ENCODE measurements at regions of chr19 and their contacts with region 1.

Region 1: DNA sequence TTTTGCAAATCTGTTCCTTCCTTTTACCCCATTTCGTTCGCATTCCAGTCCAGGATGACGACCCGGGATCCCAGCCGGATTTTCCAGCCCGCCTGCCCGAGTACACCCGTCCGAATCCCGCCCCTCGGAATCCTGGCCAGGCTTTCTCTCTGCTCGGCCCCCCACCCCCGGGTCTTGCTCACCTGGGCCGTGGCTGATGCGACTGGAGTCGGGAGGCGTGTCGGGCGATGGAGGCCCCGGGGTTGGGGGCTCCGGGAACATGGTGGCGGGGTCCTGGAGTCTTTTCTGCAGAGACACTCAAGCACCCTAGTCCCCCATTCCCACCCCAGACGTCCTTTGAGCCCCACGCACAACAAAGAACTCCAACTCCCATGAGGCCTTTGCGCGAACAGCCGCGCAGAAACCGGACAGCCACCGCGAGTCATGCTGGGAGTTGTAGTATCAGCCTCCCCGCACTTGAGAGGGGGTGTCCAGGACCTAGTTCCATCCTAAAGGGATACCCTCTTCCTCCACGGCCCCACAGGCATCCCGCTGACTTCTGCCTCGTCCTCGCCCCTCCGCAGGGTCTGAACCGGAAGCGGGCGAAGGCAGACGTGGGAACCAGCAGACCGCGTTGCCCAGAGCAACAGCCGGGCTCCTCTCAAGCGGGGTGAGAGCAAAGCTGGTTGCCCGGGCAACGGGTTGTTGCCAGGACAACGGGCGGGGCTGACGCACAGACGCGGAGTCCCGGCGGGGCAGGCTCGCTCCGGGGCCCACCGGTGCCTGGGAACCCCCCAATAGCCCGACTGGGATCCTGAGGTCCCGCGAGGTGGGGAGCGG is 1.1 kb downstream of the SYT5 start:
- DNase-seq: peak; percentile 82 to 98 (median 91)
- ATAC-seq: peak; percentile 80
- H3K4me3 ChIP-seq: peak overlapping the region; percentile 46
- H3K4me3 Mint-ChIP-seq: peak overlapping the region; percentile 50
- H3K27ac ChIP-seq: no peak overlapping the region
- H3K27ac Mint-ChIP-seq: peak overlapping the region; percentile 41
- H3K4me1 ChIP-seq: peaks cover 35% of the 10 kb centered on the region
- H3K4me1 Mint-ChIP-seq: peaks cover 34% of the 10 kb centered on the region
- H3K27me3 ChIP-seq: peaks cover 77 to 78% of the 10 kb centered on the region in 2 experiments
- H3K27me3 Mint-ChIP-seq: peaks cover 88% of the 10 kb centered on the region
- CTCF ChIP-seq: no peak

Region 2: GRCh38 chr19:55132453-55133129 is 46.4 kb before region 1 on chr19:
- CTCF ChIA-PET with region 1: no interaction called
- POLR2A ChIA-PET with region 1: no interaction called
- intact Hi-C with region 1: no loop called
- DNase-seq: no peak
- ATAC-seq: no peak
- H3K4me3 ChIP-seq: no peak overlapping the region
- H3K4me3 Mint-ChIP-seq: no peak overlapping the region
- H3K27ac ChIP-seq: no peak overlapping the region
- H3K27ac Mint-ChIP-seq: no peak overlapping the region
- H3K4me1 ChIP-seq: no peaks in the 10 kb centered on the region
- H3K4me1 Mint-ChIP-seq: no peaks in the 10 kb centered on the region
- H3K27me3 ChIP-seq: peaks cover 26 to 27% of the 10 kb centered on the region in 2 experiments
- H3K27me3 Mint-ChIP-seq: peaks cover 49% of the 10 kb centered on the region
- CTCF ChIP-seq: no peak

Region 3: GRCh38 chr19:55166530-55167268 is 12.3 kb before region 1 on chr19 and contains the start of gene DNAAF3:
- CTCF ChIA-PET with region 1: no interaction called
- POLR2A ChIA-PET with region 1: no interaction called
- intact Hi-C with region 1: no loop called
- DNase-seq: peak in 12 of 14 experiments; percentile 23 to 83 (median 66)
- ATAC-seq: peak; percentile 72
- H3K4me3 ChIP-seq: peak within 1 kb of the TSS; percentile 37
- H3K4me3 Mint-ChIP-seq: peak within 1 kb of the TSS; percentile 85
- H3K27ac ChIP-seq: no peak within 1 kb of the TSS
- H3K27ac Mint-ChIP-seq: peak within 1 kb of the TSS; percentile 55
- H3K4me1 ChIP-seq: peaks cover 15% of the 10 kb centered on the region
- H3K4me1 Mint-ChIP-seq: peaks cover 20% of the 10 kb centered on the region
- H3K27me3 ChIP-seq: peaks cover 67 to 79% of the 10 kb centered on the region in 2 experiments
- H3K27me3 Mint-ChIP-seq: peaks cover 77% of the 10 kb centered on the region
- CTCF ChIP-seq: no peak
- total RNA-seq, gene DNAAF3: not detected

Region 4: DNA sequence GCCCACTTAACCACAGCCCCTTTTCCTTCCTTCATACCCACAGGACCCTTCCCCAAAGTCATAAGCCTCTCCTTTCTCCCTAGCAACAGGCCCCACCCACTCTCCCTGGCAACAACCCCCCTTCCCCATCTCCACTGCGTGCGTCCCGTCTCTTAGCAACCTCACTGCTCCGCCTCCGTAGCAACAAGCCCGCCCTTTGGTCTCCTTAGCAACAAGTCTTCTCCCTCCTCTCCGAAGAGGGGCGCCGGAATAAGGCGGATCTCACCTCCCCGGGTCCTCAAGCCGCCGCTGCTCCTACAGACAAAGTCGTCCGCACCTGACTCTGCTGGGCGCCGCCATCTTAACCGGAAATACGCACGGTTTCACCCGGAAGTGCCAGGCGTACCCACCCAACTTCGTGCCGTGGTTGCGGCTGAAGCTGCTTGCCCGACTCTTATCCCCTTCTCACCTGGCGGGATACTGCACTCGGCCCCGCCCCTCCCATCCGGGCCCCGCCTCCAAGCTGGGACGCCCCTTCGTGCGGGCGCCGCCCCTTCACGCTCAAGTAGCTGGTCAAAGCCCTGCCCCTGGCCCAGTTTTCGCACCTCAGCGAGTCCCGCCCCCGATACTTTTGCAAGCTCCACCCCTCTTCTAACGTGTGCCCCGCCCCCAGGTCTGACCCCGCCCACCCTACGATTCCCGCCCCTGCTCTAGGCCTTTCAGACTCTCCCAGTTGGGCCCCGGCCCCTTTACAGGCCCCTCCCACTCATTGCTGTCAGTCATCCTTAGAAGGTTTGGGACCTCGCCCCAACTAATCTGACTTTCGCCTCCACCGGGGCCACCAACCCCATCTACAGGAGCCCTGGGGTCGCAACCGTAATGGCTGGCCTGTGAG is 101.0 kb after region 1 on chr19 and contains the start of gene HSPBP1:
- CTCF ChIA-PET with region 1: no interaction called
- POLR2A ChIA-PET with region 1: no interaction called
- intact Hi-C with region 1: no loop called
- DNase-seq: peak; percentile 88 to 98 (median 92)
- ATAC-seq: peak; percentile 86
- H3K4me3 ChIP-seq: peak within 1 kb of the TSS; percentile 73
- H3K4me3 Mint-ChIP-seq: peak within 1 kb of the TSS; percentile 98
- H3K27ac ChIP-seq: peak within 1 kb of the TSS; percentile 79 to 88
- H3K27ac Mint-ChIP-seq: peak within 1 kb of the TSS; percentile 93
- H3K4me1 ChIP-seq: peaks cover 41% of the 10 kb centered on the region
- H3K4me1 Mint-ChIP-seq: peaks cover 42% of the 10 kb centered on the region
- H3K27me3 ChIP-seq: no peaks in the 10 kb centered on the region
- H3K27me3 Mint-ChIP-seq: no peaks in the 10 kb centered on the region
- CTCF ChIP-seq: no peak
- total RNA-seq, gene HSPBP1: 14.3 to 15.1 TPM

Region 5: GRCh38 chr19:55301459-55302317 is 122.7 kb after region 1 on chr19:
- CTCF ChIA-PET with region 1: no interaction called
- POLR2A ChIA-PET with region 1: no interaction called
- intact Hi-C with region 1: loop called in 1 of 2 experiments (anchors 5 kb)
- DNase-seq: peak; percentile 87 to 98 (median 94)
- ATAC-seq: peak; percentile 89
- H3K4me3 ChIP-seq: peak overlapping the region; percentile 37
- H3K4me3 Mint-ChIP-seq: peak overlapping the region; percentile 88
- H3K27ac ChIP-seq: no peak overlapping the region
- H3K27ac Mint-ChIP-seq: peak overlapping the region; percentile 61
- H3K4me1 ChIP-seq: peaks cover 21% of the 10 kb centered on the region
- H3K4me1 Mint-ChIP-seq: peaks cover 14% of the 10 kb centered on the region
- H3K27me3 ChIP-seq: no peaks in the 10 kb centered on the region
- H3K27me3 Mint-ChIP-seq: no peaks in the 10 kb centered on the region
- CTCF ChIP-seq: peak; percentile 95

Measured in CD4-positive, alpha-beta T cell (primary cell).